ENCODE measurements at regions of chr15 and their contacts with region 1.

Region 1: GRCh38 chr15:75201609-75202250 is at the start of gene C15orf39:
- H3K4me3 Mint-ChIP-seq: peak within 1 kb of the TSS; percentile 85
- H3K27ac Mint-ChIP-seq: peak within 1 kb of the TSS; percentile 95
- H3K4me1 Mint-ChIP-seq: peaks cover 72% of the 10 kb centered on the region
- H3K27me3 Mint-ChIP-seq: peaks cover 21% of the 10 kb centered on the region

Region 2: DNA sequence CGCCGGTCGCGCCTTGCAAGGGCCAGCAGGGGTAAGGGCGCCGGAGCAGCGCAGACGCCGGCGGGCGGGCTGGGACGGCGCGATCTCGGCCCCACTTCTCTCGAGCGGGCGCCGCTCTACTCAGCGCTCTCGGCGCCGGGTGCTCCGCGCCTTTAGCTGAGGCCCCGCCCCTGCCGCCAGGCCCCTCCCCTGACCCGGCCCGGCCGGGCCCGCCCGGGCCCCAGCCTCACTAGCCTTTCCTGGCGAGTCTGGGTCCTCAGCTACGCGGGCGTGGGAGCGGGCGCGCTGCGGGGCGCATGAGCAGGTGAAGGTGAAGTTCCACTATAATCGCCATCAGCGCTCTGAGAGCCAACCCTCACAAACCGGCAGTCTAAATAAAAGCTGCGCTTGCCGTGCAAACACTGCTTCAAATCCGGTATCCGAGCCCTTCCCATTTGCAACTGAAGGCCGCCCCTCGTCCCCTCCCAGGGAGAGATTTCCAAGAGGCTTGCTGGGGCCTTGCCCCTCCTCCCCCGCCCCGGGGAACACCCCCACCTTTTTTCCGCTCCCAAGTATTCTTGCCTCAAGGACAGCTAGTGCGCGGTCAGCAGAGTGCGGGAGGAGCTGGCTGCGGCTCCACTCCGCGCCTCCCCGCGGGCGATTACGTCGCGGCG is 245.0 kb before region 1 on chr15 and contains the start of gene RPP25:
- intact Hi-C with region 1: loop called (anchors 2 kb)
- H3K4me3 Mint-ChIP-seq: peak within 1 kb of the TSS; percentile 74
- H3K27ac Mint-ChIP-seq: peak within 1 kb of the TSS; percentile 71
- H3K4me1 Mint-ChIP-seq: peaks cover 49% of the 10 kb centered on the region
- H3K27me3 Mint-ChIP-seq: peaks cover 63% of the 10 kb centered on the region

Region 3: GRCh38 chr15:75029378-75030022 is 172.2 kb before region 1 on chr15:
- intact Hi-C with region 1: loop called (anchors 1 kb)
- H3K4me3 Mint-ChIP-seq: peak overlapping the region; percentile 59
- H3K27ac Mint-ChIP-seq: peak overlapping the region; percentile 89
- H3K4me1 Mint-ChIP-seq: peaks cover 96% of the 10 kb centered on the region
- H3K27me3 Mint-ChIP-seq: no peaks in the 10 kb centered on the region

Region 4: GRCh38 chr15:75042730-75043508 is 158.8 kb before region 1 on chr15:
- intact Hi-C with region 1: loop called (anchors 1 kb)
- H3K4me3 Mint-ChIP-seq: peak overlapping the region; percentile 6
- H3K27ac Mint-ChIP-seq: peak overlapping the region; percentile 85
- H3K4me1 Mint-ChIP-seq: peaks cover 97% of the 10 kb centered on the region
- H3K27me3 Mint-ChIP-seq: no peaks in the 10 kb centered on the region

Region 5: GRCh38 chr15:75058127-75058905 is 143.4 kb before region 1 on chr15:
- intact Hi-C with region 1: no loop called
- H3K4me3 Mint-ChIP-seq: no peak overlapping the region
- H3K27ac Mint-ChIP-seq: no peak overlapping the region
- H3K4me1 Mint-ChIP-seq: peaks cover 52% of the 10 kb centered on the region
- H3K27me3 Mint-ChIP-seq: peaks cover 3% of the 10 kb centered on the region

Region 6: GRCh38 chr15:75112848-75113492 is 88.8 kb before region 1 on chr15:
- intact Hi-C with region 1: loop called (anchors 5 kb)
- H3K4me3 Mint-ChIP-seq: no peak overlapping the region
- H3K27ac Mint-ChIP-seq: peak overlapping the region; percentile 64
- H3K4me1 Mint-ChIP-seq: peaks cover 61% of the 10 kb centered on the region
- H3K27me3 Mint-ChIP-seq: peaks cover 2% of the 10 kb centered on the region

Region 7: DNA sequence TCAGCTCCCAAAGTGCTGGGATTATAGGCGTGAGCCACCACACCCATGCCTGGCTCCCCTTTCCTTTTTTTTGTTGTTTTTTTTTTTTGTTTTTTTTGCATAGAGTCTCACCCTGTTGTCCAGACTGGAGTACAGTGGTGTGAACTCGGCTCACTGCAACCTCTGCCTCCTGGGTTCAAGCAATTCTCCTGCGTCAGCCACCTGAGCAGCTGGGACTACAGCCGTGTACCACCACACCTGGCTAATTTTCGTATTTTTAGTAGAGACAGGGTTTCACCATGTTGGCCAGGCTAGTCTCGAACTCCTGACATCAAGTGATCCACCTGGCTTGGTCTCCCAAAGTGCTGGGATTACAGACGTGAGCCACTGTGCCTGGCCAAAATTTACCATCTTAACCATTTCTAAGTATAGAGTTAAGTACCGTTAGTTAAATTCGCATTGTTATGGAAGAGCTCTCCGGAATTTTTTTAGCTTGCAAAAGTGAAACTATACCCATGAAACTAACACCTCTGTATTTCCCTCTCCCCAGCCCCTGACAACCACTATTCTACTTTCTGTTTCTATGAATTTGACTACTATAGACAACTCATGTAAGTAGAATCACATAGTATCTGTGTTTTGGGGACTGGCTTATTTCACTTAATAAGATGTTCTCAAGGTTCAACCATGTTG is 71.0 kb before region 1 on chr15:
- intact Hi-C with region 1: loop called (anchors 2 kb)
- H3K4me3 Mint-ChIP-seq: peak overlapping the region; percentile 63
- H3K27ac Mint-ChIP-seq: peak overlapping the region; percentile 82
- H3K4me1 Mint-ChIP-seq: peaks cover 54% of the 10 kb centered on the region
- H3K27me3 Mint-ChIP-seq: peaks cover 9% of the 10 kb centered on the region

Region 8: GRCh38 chr15:75153087-75153486 is 48.6 kb before region 1 on chr15:
- intact Hi-C with region 1: loop called (anchors 5 kb)
- H3K4me3 Mint-ChIP-seq: peak overlapping the region; percentile 68
- H3K27ac Mint-ChIP-seq: peak overlapping the region; percentile 86
- H3K4me1 Mint-ChIP-seq: peaks cover 83% of the 10 kb centered on the region
- H3K27me3 Mint-ChIP-seq: no peaks in the 10 kb centered on the region

Measured in dendritic cell treated with granulocyte-macrophage colony-stimulating factor and Interleukin-4, amounts not matched to agents 40 ng/mL and 50 ng/mL, for 4 days (primary cell).